Activated CD8-positive, alpha-beta T cell treated with anti-CD3 and anti-CD28 coated beads, Interleukin-2, amount 10 ng/mL, durations not matched to agents 7 days and 5 days (primary cell): ENCODE measurements at regions of chr1 and their contacts with region 1.

Region 1: GRCh38 chr1:89125913-89126580 is at the start of gene GBP2:
- DNase-seq: peak; percentile 35
- ATAC-seq: peak; percentile 70
- H3K4me3 Mint-ChIP-seq: peak within 1 kb of the TSS; percentile 93
- H3K27ac Mint-ChIP-seq: peak within 1 kb of the TSS; percentile 99
- H3K4me1 Mint-ChIP-seq: peaks cover 62% of the 10 kb centered on the region
- H3K27me3 Mint-ChIP-seq: no peaks in the 10 kb centered on the region
- total RNA-seq, gene GBP2: 95.8 to 97.4 TPM

Region 2: DNA sequence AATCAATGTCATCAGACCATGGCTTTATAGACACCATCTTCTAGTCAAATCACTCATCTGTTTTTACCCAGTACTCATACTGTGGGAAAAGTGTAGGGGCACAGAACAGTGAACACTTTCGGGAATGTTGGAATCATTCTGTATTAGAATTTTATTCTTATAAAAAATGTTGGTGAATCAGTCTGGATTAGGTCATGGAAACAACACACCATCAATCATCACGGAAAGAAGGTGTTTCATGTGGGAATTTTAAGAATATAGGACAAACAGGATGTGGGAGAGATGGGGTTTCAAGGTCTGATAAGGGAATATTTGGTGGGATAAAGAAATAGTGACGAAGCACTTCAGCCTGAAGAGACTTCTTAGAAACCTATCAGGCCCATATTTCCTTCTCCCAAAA is 78.3 kb before region 1 on chr1:
- CTCF ChIA-PET with region 1: no interaction called
- POLR2A ChIA-PET with region 1: no interaction called
- DNase-seq: no peak
- ATAC-seq: no peak
- H3K4me3 Mint-ChIP-seq: no peak overlapping the region
- H3K27ac Mint-ChIP-seq: peak overlapping the region; percentile 47
- H3K4me1 Mint-ChIP-seq: peaks cover 5% of the 10 kb centered on the region
- H3K27me3 Mint-ChIP-seq: no peaks in the 10 kb centered on the region

Region 3: GRCh38 chr1:89065079-89065868 is 60.8 kb before region 1 on chr1 and contains the start of gene GBP1:
- CTCF ChIA-PET with region 1: no interaction called
- POLR2A ChIA-PET with region 1: interaction called, 17 read pairs
- DNase-seq: peak; percentile 43
- ATAC-seq: peak; percentile 82
- H3K4me3 Mint-ChIP-seq: peak within 1 kb of the TSS; percentile 90
- H3K27ac Mint-ChIP-seq: peak within 1 kb of the TSS; percentile 90
- H3K4me1 Mint-ChIP-seq: peaks cover 55% of the 10 kb centered on the region
- H3K27me3 Mint-ChIP-seq: no peaks in the 10 kb centered on the region
- total RNA-seq, gene GBP1: 146 to 147 TPM

Region 4: DNA sequence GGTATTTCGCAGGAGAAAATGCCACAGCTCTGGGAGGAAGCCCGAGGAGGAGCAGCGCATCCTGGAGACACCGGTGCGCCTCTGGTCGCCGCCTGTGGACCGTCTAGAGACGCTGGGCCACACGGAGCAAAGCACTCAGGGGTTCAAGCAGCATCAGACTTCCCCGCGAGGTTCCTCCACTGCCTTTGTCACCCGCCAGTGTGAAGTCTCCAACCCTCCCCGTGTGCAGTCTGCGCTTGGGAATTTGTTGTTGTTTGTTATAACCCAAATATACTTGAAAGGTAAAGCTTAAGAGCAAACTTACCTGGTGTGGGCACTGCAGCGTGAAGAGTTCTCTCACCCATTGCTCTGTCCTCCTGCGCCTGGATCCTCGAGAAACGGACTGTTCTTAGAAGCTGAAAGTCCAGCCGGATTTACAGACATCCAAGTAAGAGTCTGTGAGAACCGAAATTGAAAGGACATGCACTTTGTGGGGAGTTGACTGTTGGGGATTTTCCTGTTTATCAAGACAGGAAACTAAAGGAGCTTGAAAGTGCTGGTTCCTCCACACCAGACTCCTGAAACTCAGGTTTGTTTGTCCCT is 72.5 kb after region 1 on chr1 and contains the start of gene GBP4:
- CTCF ChIA-PET with region 1: interaction called, 9 read pairs
- POLR2A ChIA-PET with region 1: interaction called, 46 read pairs
- DNase-seq: peak; percentile 66
- ATAC-seq: peak; percentile 81
- H3K4me3 Mint-ChIP-seq: peak within 1 kb of the TSS; percentile 86
- H3K27ac Mint-ChIP-seq: peak within 1 kb of the TSS; percentile 91
- H3K4me1 Mint-ChIP-seq: peaks cover 62% of the 10 kb centered on the region
- H3K27me3 Mint-ChIP-seq: no peaks in the 10 kb centered on the region
- total RNA-seq, gene GBP4: 51.0 to 60.7 TPM

Region 5: GRCh38 chr1:89286549-89287180 is 160.6 kb after region 1 on chr1:
- CTCF ChIA-PET with region 1: no interaction called
- POLR2A ChIA-PET with region 1: interaction called, 31 read pairs
- DNase-seq: peak; percentile 50
- ATAC-seq: peak; percentile 84
- H3K4me3 Mint-ChIP-seq: peak overlapping the region; percentile 31
- H3K27ac Mint-ChIP-seq: peak overlapping the region; percentile 88
- H3K4me1 Mint-ChIP-seq: peaks cover 82% of the 10 kb centered on the region
- H3K27me3 Mint-ChIP-seq: no peaks in the 10 kb centered on the region